ENCODE measurements at regions of chr11 and their contacts with region 1.

Region 1: DNA sequence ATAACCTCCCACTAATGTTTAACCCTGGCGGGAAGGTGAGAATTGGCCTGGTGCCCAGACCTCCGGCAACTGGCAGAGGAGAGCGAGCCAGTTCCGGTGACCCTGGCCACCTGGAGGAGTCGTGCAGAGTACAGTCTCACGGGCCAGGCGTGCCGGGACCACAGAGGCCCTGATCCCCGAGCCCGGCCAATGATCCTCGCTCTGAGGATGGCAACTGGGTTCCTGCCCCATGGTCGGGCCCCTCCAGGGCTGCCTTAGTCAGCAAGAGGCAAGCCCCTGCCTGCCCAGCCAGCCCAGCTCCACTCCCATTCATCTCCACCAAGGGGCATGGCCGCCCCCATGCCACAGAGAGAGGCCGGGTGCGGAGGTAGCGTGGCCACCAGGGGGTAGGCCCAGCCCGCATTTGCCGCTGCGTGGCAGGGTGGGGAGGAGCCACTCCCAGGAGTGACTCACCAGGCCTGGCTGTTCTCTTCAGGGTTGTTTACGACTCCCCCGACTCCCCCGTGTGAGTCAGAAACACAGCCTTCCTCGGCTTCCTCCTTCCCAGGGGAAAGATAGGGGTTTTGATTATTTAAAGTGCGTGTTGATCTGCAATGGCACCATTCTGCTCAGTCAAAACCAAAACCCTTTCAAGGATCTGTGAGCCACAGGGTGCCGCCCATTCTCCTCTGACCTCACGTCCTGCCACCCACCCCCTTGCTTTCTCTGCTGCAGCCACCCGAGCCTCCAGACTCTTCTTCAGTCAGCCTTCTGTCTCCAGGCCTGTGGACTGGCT is at the start of gene SLC25A45:
- DNase-seq: peak; percentile 89 to 98 (median 91)
- H3K4me3 ChIP-seq: peak within 1 kb of the TSS; percentile 67 to 76
- H3K4me3 Mint-ChIP-seq: peak within 1 kb of the TSS; percentile 85 to 95 (median 91)
- H3K27ac ChIP-seq: peak within 1 kb of the TSS; percentile 94
- H3K27ac Mint-ChIP-seq: peak within 1 kb of the TSS; percentile 96 to 100 (median 99)
- H3K4me1 ChIP-seq: peaks cover 58% of the 10 kb centered on the region
- H3K4me1 Mint-ChIP-seq: peaks cover 22 to 63% (median 44%) of the 10 kb centered on the region in 4 donors
- H3K27me3 ChIP-seq: no peaks in the 10 kb centered on the region
- H3K27me3 Mint-ChIP-seq: no peaks in the 10 kb centered on the region
- total RNA-seq, gene SLC25A45: 17.0 to 24.2 TPM

Region 2: DNA sequence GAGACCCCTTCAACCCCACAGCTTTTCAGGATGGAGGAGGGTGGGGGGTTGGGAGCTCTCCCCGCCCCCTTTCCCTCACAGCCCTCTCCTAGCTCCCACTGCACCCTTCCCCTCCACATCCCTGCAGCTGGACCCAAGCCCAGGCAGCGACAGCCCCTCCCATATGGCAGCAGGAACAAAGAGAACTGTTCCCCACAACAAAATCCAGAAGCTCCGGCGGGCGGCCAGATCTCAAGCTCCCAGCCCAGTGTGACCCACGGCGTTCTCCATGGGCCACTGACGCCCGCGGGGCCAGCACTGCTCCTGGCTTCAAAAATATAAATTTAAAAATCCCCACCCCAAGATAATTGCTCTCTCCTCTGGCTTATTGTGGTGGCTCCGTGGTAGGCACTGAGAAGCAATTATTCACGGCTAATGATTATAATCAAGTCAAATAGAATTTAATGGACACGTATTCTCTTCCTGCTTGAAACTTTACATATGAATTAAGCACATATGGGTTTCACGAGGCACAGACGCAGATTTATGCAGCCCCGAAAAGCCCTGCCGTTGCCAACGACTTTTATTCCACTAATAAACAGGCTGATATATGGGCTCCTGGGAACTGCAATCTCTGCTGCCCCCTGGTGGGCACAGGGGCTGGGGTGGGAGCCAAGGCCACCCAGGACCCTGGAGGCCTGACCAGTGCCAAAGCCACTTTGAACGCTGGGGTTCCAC is 1233.9 kb before region 1 on chr11:
- CTCF ChIA-PET with region 1: no interaction called
- POLR2A ChIA-PET with region 1: no interaction called
- intact Hi-C with region 1: no loop called
- DNase-seq: peak; percentile 57 to 66 (median 63)
- H3K4me3 ChIP-seq: no peak overlapping the region
- H3K4me3 Mint-ChIP-seq: no peak overlapping the region
- H3K27ac ChIP-seq: no peak overlapping the region
- H3K27ac Mint-ChIP-seq: no peak overlapping the region
- H3K4me1 ChIP-seq: no peaks in the 10 kb centered on the region
- H3K4me1 Mint-ChIP-seq: peaks cover 8 to 13% (median 9%) of the 10 kb centered on the region in 4 donors
- H3K27me3 ChIP-seq: no peaks in the 10 kb centered on the region
- H3K27me3 Mint-ChIP-seq: no peaks in the 10 kb centered on the region

Region 3: DNA sequence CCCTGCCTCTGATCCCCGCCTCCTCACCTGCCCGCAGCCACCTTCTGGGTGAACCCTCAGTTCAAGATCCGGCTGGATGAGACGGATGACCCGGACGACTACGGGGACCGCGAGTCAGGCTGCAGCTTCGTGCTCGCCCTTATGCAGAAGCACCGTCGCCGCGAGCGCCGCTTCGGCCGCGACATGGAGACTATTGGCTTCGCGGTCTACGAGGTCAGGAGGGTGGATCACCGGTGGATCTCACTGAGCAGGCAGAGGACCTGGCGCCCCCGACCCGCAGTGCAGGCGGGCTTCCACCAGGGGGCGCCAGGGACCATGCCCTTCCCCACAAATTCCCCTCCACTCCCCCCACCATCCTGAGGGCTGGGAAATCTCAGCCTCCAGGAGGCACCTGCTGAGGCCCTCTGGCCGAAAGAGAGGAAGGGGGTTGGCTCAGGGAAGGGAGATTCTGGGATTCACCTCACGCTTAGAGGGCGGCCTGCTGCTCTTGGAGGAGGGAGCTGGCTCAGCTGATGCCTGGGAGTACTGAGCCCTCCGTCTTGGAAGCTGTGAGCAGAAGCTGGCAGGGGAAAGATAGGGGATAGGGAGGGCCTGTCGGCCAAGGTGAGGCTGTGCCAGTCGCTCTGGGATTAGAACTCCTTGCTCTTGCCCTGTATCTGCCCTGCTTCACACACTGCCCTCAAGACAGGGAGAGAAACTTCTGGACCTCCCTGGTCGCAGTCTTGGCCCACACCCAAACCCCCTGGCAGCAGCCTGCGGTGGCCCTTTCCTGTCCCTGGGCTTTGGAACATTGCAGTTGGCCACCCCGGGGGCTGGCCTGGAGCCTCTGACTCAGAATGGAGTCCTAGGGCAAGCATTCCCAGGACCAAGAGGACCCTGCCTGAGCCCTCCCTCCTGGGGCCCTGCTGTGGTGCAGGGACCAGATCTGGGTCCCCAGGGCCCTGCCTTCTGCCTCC is 177.3 kb before region 1 on chr11:
- CTCF ChIA-PET with region 1: no interaction called
- POLR2A ChIA-PET with region 1: no interaction called
- intact Hi-C with region 1: no loop called
- DNase-seq: peak in 4 of 5 donors; percentile 36 to 54 (median 44)
- H3K4me3 ChIP-seq: no peak overlapping the region
- H3K4me3 Mint-ChIP-seq: no peak overlapping the region
- H3K27ac ChIP-seq: no peak overlapping the region
- H3K27ac Mint-ChIP-seq: no peak overlapping the region
- H3K4me1 ChIP-seq: no peaks in the 10 kb centered on the region
- H3K4me1 Mint-ChIP-seq: peaks cover 0 to 6% (median 3%) of the 10 kb centered on the region in 4 donors
- H3K27me3 ChIP-seq: no peaks in the 10 kb centered on the region
- H3K27me3 Mint-ChIP-seq: no peaks in the 10 kb centered on the region

Region 4: DNA sequence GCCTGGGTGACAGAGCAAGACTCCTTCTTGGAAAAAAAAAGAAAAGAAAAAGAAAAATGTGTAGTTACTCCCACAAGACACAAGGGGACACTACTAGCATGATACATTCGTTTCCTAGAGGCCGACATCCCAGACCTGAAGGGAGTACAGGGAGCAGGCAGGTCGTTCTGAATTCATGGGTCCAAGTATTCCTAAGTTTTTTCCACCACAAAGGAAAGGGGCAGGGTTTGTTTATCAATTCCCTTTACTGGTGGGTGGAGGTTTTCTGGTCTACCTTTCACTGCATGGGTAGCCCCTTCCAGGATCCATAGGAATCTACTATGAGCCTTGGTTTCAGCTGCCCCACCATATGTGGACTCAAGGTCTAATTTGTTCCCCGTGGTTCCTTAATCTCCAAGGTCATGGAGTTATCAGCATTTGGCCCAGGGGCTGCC is 15.9 kb before region 1 on chr11:
- CTCF ChIA-PET with region 1: interaction called, 14 read pairs
- POLR2A ChIA-PET with region 1: interaction called, 3 read pairs
- intact Hi-C with region 1: loop called (anchors 2 kb)
- DNase-seq: peak; percentile 59 to 69 (median 64)
- H3K4me3 ChIP-seq: no peak overlapping the region
- H3K4me3 Mint-ChIP-seq: no peak overlapping the region
- H3K27ac ChIP-seq: no peak overlapping the region
- H3K27ac Mint-ChIP-seq: no peak overlapping the region
- H3K4me1 ChIP-seq: no peaks in the 10 kb centered on the region
- H3K4me1 Mint-ChIP-seq: peaks cover 0 to 3% (median 1%) of the 10 kb centered on the region in 4 donors
- H3K27me3 ChIP-seq: no peaks in the 10 kb centered on the region
- H3K27me3 Mint-ChIP-seq: no peaks in the 10 kb centered on the region

Region 5: GRCh38 chr11:65432686-65433582 is 50.7 kb after region 1 on chr11:
- CTCF ChIA-PET with region 1: interaction called, 5 read pairs
- POLR2A ChIA-PET with region 1: interaction called, 524 read pairs
- intact Hi-C with region 1: loop called (anchors 1 kb)
- DNase-seq: peak in 4 of 5 donors; percentile 55 to 68 (median 60)
- H3K4me3 ChIP-seq: no peak overlapping the region
- H3K4me3 Mint-ChIP-seq: peak overlapping the region in 5 of 8 donors; percentile 27 to 61 (median 40)
- H3K27ac ChIP-seq: peak overlapping the region; percentile 2
- H3K27ac Mint-ChIP-seq: peak overlapping the region; percentile 77 to 94 (median 89)
- H3K4me1 ChIP-seq: peaks cover 77% of the 10 kb centered on the region
- H3K4me1 Mint-ChIP-seq: peaks cover 65 to 92% (median 76%) of the 10 kb centered on the region in 4 donors
- H3K27me3 ChIP-seq: no peaks in the 10 kb centered on the region
- H3K27me3 Mint-ChIP-seq: no peaks in the 10 kb centered on the region

Region 6: GRCh38 chr11:65471410-65471762 is 89.2 kb after region 1 on chr11:
- CTCF ChIA-PET with region 1: interaction called, 7 read pairs
- POLR2A ChIA-PET with region 1: interaction called, 10 read pairs
- intact Hi-C with region 1: loop called (anchors 1 kb)
- DNase-seq: no peak
- H3K4me3 ChIP-seq: no peak overlapping the region
- H3K4me3 Mint-ChIP-seq: peak overlapping the region in 1 of 8 donors; percentile 74
- H3K27ac ChIP-seq: peak overlapping the region; percentile 74
- H3K27ac Mint-ChIP-seq: peak overlapping the region; percentile 88 to 99 (median 98)
- H3K4me1 ChIP-seq: peaks cover 18% of the 10 kb centered on the region
- H3K4me1 Mint-ChIP-seq: peaks cover 12 to 27% (median 22%) of the 10 kb centered on the region in 4 donors
- H3K27me3 ChIP-seq: no peaks in the 10 kb centered on the region
- H3K27me3 Mint-ChIP-seq: no peaks in the 10 kb centered on the region

Region 7: GRCh38 chr11:65477149-65477965 is 95.1 kb after region 1 on chr11:
- CTCF ChIA-PET with region 1: interaction called, 7 read pairs
- POLR2A ChIA-PET with region 1: interaction called, 10 read pairs
- intact Hi-C with region 1: loop called (anchors 1 kb)
- DNase-seq: peak; percentile 78 to 90 (median 82)
- H3K4me3 ChIP-seq: peak overlapping the region; percentile 90 to 93
- H3K4me3 Mint-ChIP-seq: peak overlapping the region; percentile 95 to 100 (median 100)
- H3K27ac ChIP-seq: peak overlapping the region; percentile 93
- H3K27ac Mint-ChIP-seq: peak overlapping the region; percentile 97 to 100 (median 99)
- H3K4me1 ChIP-seq: peaks cover 20% of the 10 kb centered on the region
- H3K4me1 Mint-ChIP-seq: peaks cover 10 to 26% (median 17%) of the 10 kb centered on the region in 4 donors
- H3K27me3 ChIP-seq: no peaks in the 10 kb centered on the region
- H3K27me3 Mint-ChIP-seq: no peaks in the 10 kb centered on the region

Region 8: DNA sequence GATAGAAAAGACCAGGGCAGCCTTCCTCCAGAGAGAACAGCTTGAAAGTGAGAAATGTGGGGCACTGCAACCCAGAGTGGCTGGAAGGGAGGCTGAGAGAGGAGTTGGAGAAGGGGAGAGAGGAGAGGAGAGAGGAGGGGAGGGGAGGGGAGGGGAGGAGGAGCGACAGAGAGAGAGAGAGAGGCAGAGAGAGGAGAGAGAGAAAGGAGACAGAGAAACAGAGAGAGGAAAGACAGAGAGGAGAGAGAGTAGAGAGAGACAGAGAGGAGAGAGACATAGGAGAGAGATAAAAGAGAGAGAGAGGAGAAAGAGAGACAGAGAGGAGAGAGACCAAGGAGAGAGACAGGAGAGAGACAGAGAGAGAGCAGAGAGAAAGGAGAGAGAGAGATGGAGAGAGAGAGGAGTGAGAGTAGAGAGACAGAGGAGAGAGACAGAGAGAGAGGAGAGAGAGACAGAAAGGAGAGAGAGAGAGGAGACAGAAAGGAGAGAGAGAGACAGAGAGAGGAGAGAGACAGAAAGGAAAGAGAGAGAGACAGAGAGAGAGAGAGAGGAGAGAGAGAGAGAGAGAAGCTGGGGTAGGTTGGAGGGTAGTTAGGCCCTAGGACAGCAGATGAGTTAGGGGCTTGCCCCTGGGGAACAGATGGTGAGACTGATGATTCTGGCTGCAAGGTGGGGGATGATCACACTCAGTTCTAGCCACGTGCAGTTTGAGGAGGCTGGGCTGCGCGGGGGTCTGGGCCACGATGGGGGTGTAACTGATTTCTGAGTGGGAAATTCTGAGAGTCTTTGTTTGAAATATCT is 134.1 kb after region 1 on chr11:
- CTCF ChIA-PET with region 1: interaction called, 75 read pairs
- POLR2A ChIA-PET with region 1: interaction called, 654 read pairs
- intact Hi-C with region 1: no loop called
- DNase-seq: peak in 1 of 5 donors; percentile 15
- H3K4me3 ChIP-seq: no peak overlapping the region
- H3K4me3 Mint-ChIP-seq: peak overlapping the region in 2 of 8 donors; percentile 57 to 70
- H3K27ac ChIP-seq: no peak overlapping the region
- H3K27ac Mint-ChIP-seq: peak overlapping the region; percentile 21 to 92 (median 72)
- H3K4me1 ChIP-seq: no peaks in the 10 kb centered on the region
- H3K4me1 Mint-ChIP-seq: peaks cover 4 to 11% (median 10%) of the 10 kb centered on the region in 4 donors
- H3K27me3 ChIP-seq: no peaks in the 10 kb centered on the region
- H3K27me3 Mint-ChIP-seq: peaks cover 0 to 3% of the 10 kb centered on the region in 2 donors

Region 9: DNA sequence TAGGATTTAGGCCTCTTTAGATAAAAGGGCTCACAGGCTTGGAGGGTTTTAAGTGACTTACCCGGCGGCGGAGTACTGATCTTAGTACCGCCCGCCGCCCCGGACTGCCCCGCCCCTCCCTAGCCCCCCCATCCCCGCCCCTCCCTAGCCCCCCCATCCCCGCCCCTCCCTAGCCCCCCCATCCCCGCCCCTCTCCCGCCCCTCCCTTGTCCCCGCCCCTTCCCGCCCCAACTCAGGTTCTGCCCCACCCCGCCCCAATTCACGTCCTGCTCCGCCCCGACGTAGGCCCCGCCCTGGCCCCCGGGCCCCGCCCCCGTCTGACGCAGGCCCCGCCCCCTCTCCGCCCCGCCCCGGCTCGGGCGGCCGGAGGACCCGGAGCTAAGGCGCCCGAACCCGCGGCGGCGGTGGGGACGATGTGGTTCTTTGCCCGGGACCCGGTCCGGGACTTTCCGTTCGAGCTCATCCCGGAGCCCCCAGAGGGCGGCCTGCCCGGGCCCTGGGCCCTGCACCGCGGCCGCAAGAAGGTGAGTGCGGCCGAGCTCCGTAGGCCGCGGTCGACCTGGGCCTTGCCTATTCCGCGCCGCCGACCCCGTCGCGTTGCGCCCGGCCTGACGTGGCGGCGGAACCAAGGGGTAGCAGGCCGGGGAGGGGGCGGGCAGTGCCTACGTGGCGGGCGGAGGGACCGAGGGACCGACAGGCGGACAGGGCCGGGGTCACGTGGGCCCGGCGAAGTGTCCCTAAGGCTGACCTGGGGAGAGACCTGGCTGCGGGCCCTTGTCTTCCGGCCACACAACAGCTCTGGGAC is 142.7 kb after region 1 on chr11 and contains the start of gene SCYL1:
- CTCF ChIA-PET with region 1: no interaction called
- POLR2A ChIA-PET with region 1: interaction called, 12 read pairs
- intact Hi-C with region 1: no loop called
- DNase-seq: peak; percentile 72 to 82 (median 75)
- H3K4me3 ChIP-seq: peak within 1 kb of the TSS; percentile 78 to 83
- H3K4me3 Mint-ChIP-seq: peak within 1 kb of the TSS; percentile 81 to 92 (median 88)
- H3K27ac ChIP-seq: peak within 1 kb of the TSS; percentile 84
- H3K27ac Mint-ChIP-seq: peak within 1 kb of the TSS; percentile 81 to 98 (median 94)
- H3K4me1 ChIP-seq: peaks cover 54% of the 10 kb centered on the region
- H3K4me1 Mint-ChIP-seq: peaks cover 35 to 63% (median 49%) of the 10 kb centered on the region in 4 donors
- H3K27me3 ChIP-seq: no peaks in the 10 kb centered on the region
- H3K27me3 Mint-ChIP-seq: no peaks in the 10 kb centered on the region
- total RNA-seq, gene SCYL1: 72.5 to 81.3 TPM